Ovary (tissue), 10 donors: ENCODE measurements at regions of chrX and their contacts with region 1.

Region 1: DNA sequence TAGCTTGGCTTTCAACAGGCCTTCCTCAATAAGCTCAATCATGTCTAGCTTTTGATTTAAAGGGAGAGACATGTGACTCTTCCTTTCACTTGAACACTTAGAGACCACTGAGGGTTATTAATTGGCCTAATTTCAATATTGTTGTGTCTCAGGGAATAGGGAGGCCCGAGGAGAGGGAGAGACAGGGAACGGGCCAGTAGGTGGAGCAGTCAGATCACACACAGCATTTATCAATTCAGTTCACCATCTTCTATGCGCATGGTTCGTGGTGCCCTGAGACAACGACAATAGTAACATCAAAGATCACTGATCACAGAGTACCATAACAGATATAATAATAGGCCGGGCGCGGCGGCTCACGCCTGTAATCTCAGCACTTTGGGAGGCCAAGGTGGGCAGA is 17.8 kb downstream of the ZNF81 start:
- DNase-seq: peak; percentile 31 to 57 (median 51)
- H3K4me3 ChIP-seq: no peak overlapping the region
- H3K27ac ChIP-seq: no peak overlapping the region
- H3K4me1 ChIP-seq: no peaks in the 10 kb centered on the region
- H3K27me3 ChIP-seq: no peaks in the 10 kb centered on the region
- CTCF ChIP-seq: peak in 2 of 3 donors; percentile 34 to 43
- EP300 ChIP-seq: no peak
- POLR2A ChIP-seq: no peak

Region 2: DNA sequence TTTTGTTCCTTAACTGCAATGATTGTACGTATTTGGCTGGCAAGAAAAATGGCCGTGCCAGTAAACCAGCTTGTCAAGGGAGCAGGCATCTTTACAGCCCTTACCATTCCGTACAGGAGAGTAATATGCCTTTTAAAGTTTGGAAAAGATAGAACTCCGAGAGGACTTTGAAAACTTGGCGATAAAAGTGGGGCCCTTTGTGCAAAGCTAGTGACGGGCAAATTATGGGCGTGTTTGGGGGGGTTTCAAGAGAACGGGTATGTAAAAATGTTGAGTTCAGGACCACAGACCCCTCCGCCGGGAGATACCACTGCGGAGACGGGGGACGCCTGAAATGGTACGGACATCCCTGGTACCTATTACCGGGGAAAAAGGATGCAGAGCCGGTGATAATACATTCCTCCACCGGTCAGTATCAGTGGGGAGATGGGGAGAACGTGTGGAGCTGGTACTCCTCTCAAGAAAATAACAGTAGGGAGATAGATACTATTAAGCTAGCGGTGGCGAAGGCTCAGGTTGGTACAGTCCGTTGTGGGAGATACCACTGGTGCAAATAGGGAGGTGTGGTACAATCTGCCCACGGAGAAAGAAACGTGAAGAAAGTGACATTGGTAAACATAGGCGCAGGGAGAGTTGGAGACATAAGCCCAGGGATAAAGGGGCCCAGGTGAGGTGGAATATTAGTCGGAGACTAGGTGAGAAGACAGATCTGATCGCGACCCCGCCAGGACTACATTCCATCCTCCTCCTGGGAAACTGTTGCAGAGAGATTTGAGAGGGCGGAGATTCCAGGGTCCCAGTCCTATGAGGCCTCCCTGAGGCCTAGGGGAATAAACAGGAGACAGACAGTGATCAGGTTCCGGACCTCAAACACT is 166.8 kb after region 1 on chrX:
- intact Hi-C with region 1: loop called in 2 of 4 experiments (anchors 10 kb)
- DNase-seq: peak; percentile 76 to 85 (median 83)
- H3K4me3 ChIP-seq: peak overlapping the region; percentile 41
- H3K27ac ChIP-seq: peak overlapping the region; percentile 73 to 87
- H3K4me1 ChIP-seq: no peaks in the 10 kb centered on the region
- H3K27me3 ChIP-seq: no peaks in the 10 kb centered on the region
- CTCF ChIP-seq: no peak
- EP300 ChIP-seq: no peak
- POLR2A ChIP-seq: no peak